ENCODE measurements at regions of chr20 and their contacts with region 1.

Region 1: GRCh38 chr20:33933469-33933909 is 60.2 kb upstream of the RALY start:
- DNase-seq: peak; percentile 79 to 83
- ATAC-seq: peak; percentile 83
- H3K4me3 ChIP-seq: no peak overlapping the region
- H3K27ac ChIP-seq: no peak overlapping the region
- H3K4me1 ChIP-seq: no peaks in the 10 kb centered on the region
- H3K27me3 ChIP-seq: no peaks in the 10 kb centered on the region

Region 2: DNA sequence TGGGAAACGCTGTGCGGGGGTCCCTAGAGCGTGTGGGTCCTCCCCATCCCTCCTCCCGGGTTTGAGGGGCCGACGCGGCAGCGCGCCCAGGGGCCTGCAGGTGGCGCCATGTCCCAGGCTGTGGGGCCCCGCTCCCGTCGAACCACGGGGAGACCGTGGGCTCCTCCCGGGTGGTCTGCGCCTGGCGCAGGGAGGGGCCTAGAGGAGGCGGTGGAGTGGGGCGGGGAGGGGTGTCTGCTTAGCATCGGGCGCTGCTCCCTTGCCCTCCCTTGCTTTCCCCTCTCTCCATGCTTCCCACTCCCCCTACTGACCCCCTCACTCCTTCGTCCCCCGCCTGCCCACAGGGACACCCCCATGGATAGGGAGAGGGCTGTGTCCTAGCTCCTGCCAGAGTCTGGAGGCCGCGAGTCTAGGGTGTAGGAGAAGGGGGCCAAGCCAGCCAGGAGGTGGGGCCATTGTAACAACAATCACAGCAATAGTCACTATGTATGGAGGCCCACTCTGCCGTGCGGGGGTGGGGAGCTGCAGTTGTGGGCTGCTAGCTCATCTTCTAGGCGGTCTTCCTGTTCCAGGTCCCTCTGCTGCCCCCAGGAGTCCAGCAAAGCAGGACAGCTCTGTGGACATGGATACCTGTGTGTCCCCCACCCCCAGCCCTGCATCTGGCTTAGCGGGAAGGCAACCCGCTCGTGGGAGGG is 70.6 kb before region 1 on chr20:
- intact Hi-C with region 1: loop called in 1 of 2 experiments (anchors 5 kb)
- DNase-seq: peak; percentile 64 to 87
- ATAC-seq: peak; percentile 73
- H3K4me3 ChIP-seq: no peak overlapping the region
- H3K27ac ChIP-seq: no peak overlapping the region
- H3K4me1 ChIP-seq: no peaks in the 10 kb centered on the region
- H3K27me3 ChIP-seq: no peaks in the 10 kb centered on the region

Region 3: DNA sequence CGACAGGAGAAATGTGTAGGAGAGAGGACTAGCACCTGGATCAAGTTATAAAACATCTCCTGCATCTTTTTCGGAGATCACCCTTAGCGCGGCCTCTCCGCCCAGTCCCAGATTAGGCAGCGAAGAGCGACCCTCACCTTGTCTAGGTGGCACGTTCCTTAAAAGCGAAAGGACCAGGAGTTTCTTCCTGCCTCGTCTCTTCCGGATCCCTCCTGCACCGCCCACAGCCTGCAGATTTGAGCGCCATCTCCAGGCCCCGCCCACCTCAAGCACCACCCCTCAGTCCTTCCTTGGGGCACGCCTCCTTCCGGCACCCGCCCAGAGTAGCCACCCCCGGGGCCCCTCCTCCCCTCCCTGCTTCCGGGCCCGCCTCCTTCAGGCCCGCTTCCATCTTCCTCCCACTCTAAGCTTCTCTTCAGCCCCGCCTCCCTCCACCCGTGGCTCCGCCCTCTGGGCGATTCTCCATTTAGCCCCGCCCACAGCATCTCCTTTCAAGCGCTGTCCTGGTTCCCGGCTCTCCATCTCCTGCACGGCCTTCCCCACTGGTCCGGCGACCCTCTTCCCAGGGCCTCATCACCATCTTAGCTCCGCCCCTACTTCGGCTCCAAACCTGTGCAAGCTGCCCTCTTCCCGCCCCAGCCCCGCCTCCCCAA is 59.6 kb after region 1 on chr20:
- intact Hi-C with region 1: loop called in 1 of 2 experiments (anchors 1 kb)
- DNase-seq: peak; percentile 99 to 100
- ATAC-seq: peak; percentile 97
- H3K4me3 ChIP-seq: peak overlapping the region; percentile 78 to 82
- H3K27ac ChIP-seq: peak overlapping the region in 1 of 2 donors; percentile 77
- H3K4me1 ChIP-seq: peaks cover 2 to 8% of the 10 kb centered on the region in 2 donors
- H3K27me3 ChIP-seq: no peaks in the 10 kb centered on the region

Region 4: GRCh38 chr20:34069341-34070078 is 136.0 kb after region 1 on chr20:
- intact Hi-C with region 1: loop called (anchors 1 to 2 kb)
- DNase-seq: peak; percentile 62 to 82
- ATAC-seq: peak; percentile 88
- H3K4me3 ChIP-seq: no peak overlapping the region
- H3K27ac ChIP-seq: no peak overlapping the region
- H3K4me1 ChIP-seq: peaks cover 4 to 6% of the 10 kb centered on the region in 2 donors
- H3K27me3 ChIP-seq: no peaks in the 10 kb centered on the region

Region 5: GRCh38 chr20:34129518-34130162 is 196.2 kb after region 1 on chr20:
- intact Hi-C with region 1: loop called (anchors 5 to 10 kb)
- DNase-seq: peak; percentile 61 to 81
- ATAC-seq: peak; percentile 91
- H3K4me3 ChIP-seq: no peak overlapping the region
- H3K27ac ChIP-seq: no peak overlapping the region
- H3K4me1 ChIP-seq: no peaks in the 10 kb centered on the region
- H3K27me3 ChIP-seq: no peaks in the 10 kb centered on the region

Measured in aorta (tissue), 5 donors.